HCT116 (cell line): ENCODE measurements at regions of chr13 and their contacts with region 1.

Region 1: GRCh38 chr13:29508130-29508875 is 87.2 kb downstream of the SLC7A1 start:
- DNase-seq: peak; percentile 24
- ATAC-seq: peak; percentile 92
- H3K4me3 ChIP-seq: no peak overlapping the region
- H3K27ac ChIP-seq: no peak overlapping the region
- H3K4me1 ChIP-seq: no peaks in the 10 kb centered on the region
- H3K27me3 ChIP-seq: no peaks in the 10 kb centered on the region
- CTCF ChIP-seq: peak; percentile 45 to 98 (median 97); a peak in 5 of 6 replicates
- POLR2A ChIP-seq: no peak
- RAD21 ChIP-seq: peak; percentile 82

Region 2: GRCh38 chr13:28478127-28478526 is 1030.2 kb before region 1 on chr13:
- CTCF ChIA-PET with region 1: no interaction called
- POLR2A ChIA-PET with region 1: no interaction called
- RAD21 ChIA-PET with region 1: no interaction called
- intact Hi-C with region 1: no loop called
- DNase-seq: no peak
- ATAC-seq: no peak
- H3K4me3 ChIP-seq: no peak overlapping the region
- H3K27ac ChIP-seq: no peak overlapping the region
- H3K4me1 ChIP-seq: peaks cover 2 to 11% of the 10 kb centered on the region in 2 experiments; a peak in 3 of 4 replicates
- H3K27me3 ChIP-seq: no peaks in the 10 kb centered on the region
- CTCF ChIP-seq: no peak
- POLR2A ChIP-seq: no peak
- RAD21 ChIP-seq: no peak

Region 3: GRCh38 chr13:29028868-29029267 is 479.4 kb before region 1 on chr13:
- CTCF ChIA-PET with region 1: no interaction called
- POLR2A ChIA-PET with region 1: no interaction called
- RAD21 ChIA-PET with region 1: no interaction called
- intact Hi-C with region 1: no loop called
- DNase-seq: no peak
- ATAC-seq: no peak
- H3K4me3 ChIP-seq: no peak overlapping the region
- H3K27ac ChIP-seq: no peak overlapping the region
- H3K4me1 ChIP-seq: no peaks in the 10 kb centered on the region
- H3K27me3 ChIP-seq: peaks cover 9% of the 10 kb centered on the region; the same call in 1 of the 2 replicates
- CTCF ChIP-seq: no peak
- POLR2A ChIP-seq: no peak
- RAD21 ChIP-seq: no peak

Region 4: DNA sequence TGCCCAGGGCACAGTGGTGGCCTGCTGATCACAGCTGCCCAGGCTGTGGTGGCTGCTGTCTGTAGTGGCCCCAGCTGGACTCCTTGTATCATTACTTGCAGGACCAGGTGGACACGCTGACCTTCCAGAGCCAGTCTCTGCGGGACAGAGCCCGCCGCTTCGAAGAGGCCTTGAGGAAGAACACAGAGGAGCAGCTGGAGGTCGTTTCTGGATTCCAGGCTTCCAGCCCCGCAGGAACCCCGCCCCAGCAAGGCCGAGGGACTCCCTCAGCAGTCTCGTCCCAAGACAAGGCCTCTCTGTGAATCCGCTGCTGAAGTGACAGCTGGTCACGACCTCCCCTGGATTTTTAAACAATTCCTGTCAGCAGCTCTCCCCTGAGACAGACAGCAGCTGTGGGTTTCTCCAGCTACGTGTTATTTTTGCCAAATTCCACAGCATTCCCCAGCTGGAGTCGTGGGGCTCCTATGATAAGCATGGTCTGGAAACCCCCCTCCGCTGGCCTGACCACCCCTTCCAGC is 11.1 kb before region 1 on chr13:
- CTCF ChIA-PET with region 1: interaction called, 18 read pairs
- POLR2A ChIA-PET with region 1: no interaction called
- RAD21 ChIA-PET with region 1: no interaction called
- intact Hi-C with region 1: no loop called
- DNase-seq: no peak
- ATAC-seq: no peak
- H3K4me3 ChIP-seq: no peak overlapping the region
- H3K27ac ChIP-seq: no peak overlapping the region
- H3K4me1 ChIP-seq: no peaks in the 10 kb centered on the region
- H3K27me3 ChIP-seq: peaks cover 18% of the 10 kb centered on the region; the same call in 1 of the 2 replicates
- CTCF ChIP-seq: no peak
- POLR2A ChIP-seq: no peak
- RAD21 ChIP-seq: no peak